MCF 10A (cell line): ENCODE measurements at regions of chr17 and their contacts with region 1.

Region 1: GRCh38 chr17:43456661-43457361 is 27.0 kb upstream of the DHX8 start:
- DNase-seq: peak; percentile 91
- H3K4me3 Mint-ChIP-seq: no peak overlapping the region
- H3K27ac Mint-ChIP-seq: peak overlapping the region; percentile 63
- H3K4me1 Mint-ChIP-seq: peaks cover 21% of the 10 kb centered on the region
- H3K27me3 Mint-ChIP-seq: no peaks in the 10 kb centered on the region
- CTCF ChIP-seq: no peak

Region 2: DNA sequence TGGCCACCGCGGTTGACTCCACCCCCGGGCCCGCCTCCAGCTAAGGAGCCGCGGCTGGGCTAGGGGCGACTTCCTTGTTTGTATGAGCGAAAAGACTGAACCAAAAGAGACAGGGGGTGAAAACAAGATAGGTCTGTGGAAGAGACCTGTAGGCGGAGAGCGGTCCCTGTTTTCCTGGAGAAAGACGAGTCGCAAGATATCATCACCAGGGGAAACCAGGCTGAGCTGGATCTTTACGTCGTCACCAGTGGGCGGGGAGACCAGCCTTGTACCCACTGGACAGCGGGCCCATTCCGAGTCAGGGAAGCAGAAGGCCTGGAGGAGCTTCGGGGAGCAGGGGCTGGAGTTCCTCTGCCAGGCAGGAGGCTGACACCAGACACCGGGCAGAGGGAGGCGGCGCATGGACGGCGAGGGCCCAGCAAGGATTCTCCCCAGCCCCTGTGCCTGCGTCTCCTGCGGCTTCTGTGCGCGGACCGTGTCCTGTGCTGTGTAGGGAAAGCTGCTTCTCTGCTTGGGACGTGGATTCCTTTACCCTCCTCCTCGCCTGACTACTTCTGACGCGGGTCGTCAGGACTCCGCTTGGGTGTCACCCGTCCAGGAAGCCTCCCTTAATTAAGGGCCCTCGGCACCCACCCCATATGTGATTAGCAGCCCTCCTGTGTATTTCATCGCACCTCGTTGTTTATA is 68.3 kb before region 1 on chr17:
- CTCF ChIA-PET with region 1: interaction called, 10 read pairs
- POLR2A ChIA-PET with region 1: interaction called, 640 read pairs
- intact Hi-C with region 1: no loop called
- DNase-seq: peak; percentile 94
- H3K4me3 Mint-ChIP-seq: peak overlapping the region; percentile 83
- H3K27ac Mint-ChIP-seq: peak overlapping the region; percentile 97
- H3K4me1 Mint-ChIP-seq: peaks cover 18% of the 10 kb centered on the region
- H3K27me3 Mint-ChIP-seq: no peaks in the 10 kb centered on the region
- CTCF ChIP-seq: no peak

Region 3: DNA sequence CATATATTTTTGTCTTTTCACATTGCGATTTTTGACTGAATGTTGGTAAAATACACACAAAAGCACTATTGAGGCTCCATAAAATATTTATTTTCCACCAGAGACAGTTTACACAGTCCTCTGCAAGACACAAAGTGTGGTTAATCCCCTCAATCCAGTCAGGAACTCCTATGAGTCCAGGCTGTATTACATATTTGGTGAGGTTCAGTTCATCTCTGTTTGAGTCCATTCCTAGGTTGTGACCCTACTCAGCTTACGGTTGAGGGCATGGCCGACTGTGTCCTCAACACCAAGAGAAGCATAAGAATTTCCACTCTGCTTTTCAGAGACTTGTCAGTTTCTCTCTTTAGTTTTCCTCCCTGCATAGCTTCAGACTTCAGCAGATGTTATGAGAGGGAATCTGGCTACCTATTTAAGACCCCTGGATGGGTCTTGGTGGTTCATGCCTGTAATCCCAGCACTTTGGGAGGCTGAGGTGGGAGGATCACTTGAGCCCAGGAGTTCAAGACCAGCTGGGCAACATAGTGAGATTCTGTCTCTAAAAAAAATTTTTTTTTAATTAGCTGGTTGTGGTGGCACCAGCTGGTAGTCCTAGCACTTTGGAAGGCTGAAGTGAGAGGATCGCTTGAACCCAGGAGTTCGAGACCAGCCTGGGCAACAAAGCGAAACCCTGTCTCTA is 32.9 kb before region 1 on chr17:
- CTCF ChIA-PET with region 1: interaction called, 5 read pairs
- POLR2A ChIA-PET with region 1: interaction called, 73 read pairs
- intact Hi-C with region 1: loop called (anchors 5 kb)
- DNase-seq: no peak
- H3K4me3 Mint-ChIP-seq: no peak overlapping the region
- H3K27ac Mint-ChIP-seq: no peak overlapping the region
- H3K4me1 Mint-ChIP-seq: peaks cover 2% of the 10 kb centered on the region
- H3K27me3 Mint-ChIP-seq: no peaks in the 10 kb centered on the region
- CTCF ChIP-seq: no peak